ENCODE measurements at regions of chr11 and their contacts with region 1.

Region 1: GRCh38 chr11:102620818-102621561 is 4.1 kb downstream of the MMP20 start:
- DNase-seq: no peak
- H3K4me3 ChIP-seq: no peak overlapping the region
- H3K27me3 ChIP-seq: peaks cover 4% of the 10 kb centered on the region
- CTCF ChIP-seq: no peak

Region 2: GRCh38 chr11:102488208-102488607 is 132.8 kb before region 1 on chr11:
- CTCF ChIA-PET with region 1: no interaction called
- POLR2A ChIA-PET with region 1: no interaction called
- DNase-seq: no peak
- H3K4me3 ChIP-seq: no peak overlapping the region
- H3K27me3 ChIP-seq: peaks cover 3% of the 10 kb centered on the region
- CTCF ChIP-seq: no peak

Region 3: GRCh38 chr11:102647430-102647829 is 26.4 kb after region 1 on chr11:
- CTCF ChIA-PET with region 1: no interaction called
- POLR2A ChIA-PET with region 1: interaction called, 16 read pairs
- DNase-seq: no peak
- H3K4me3 ChIP-seq: no peak overlapping the region
- H3K27me3 ChIP-seq: no peaks in the 10 kb centered on the region
- CTCF ChIP-seq: no peak